IMR-90 (cell line): ENCODE measurements at regions of chr12 and their contacts with region 1.

Region 1: GRCh38 chr12:67747869-67748742 is 99.6 kb downstream of the DYRK2 start:
- DNase-seq: peak; percentile 72
- ATAC-seq: peak; percentile 86
- H3K4me3 ChIP-seq: no peak overlapping the region
- H3K27ac ChIP-seq: 0 out of 2 replicates have a peak overlapping the region, but pooled peaks have one; percentile 1
- H3K4me1 ChIP-seq: peaks cover 9% of the 10 kb centered on the region
- H3K27me3 ChIP-seq: no peaks in the 10 kb centered on the region
- CTCF ChIP-seq: no peak
- POLR2A ChIP-seq: no peak
- RAD21 ChIP-seq: no peak

Region 2: GRCh38 chr12:67517181-67517887 is 230.8 kb before region 1 on chr12:
- CTCF ChIA-PET with region 1: no interaction called
- POLR2A ChIA-PET with region 1: no interaction called
- dilution Hi-C with region 1: no loop called
- in situ Hi-C with region 1: no loop called
- intact Hi-C with region 1: no loop called
- DNase-seq: no peak
- ATAC-seq: no peak
- H3K4me3 ChIP-seq: no peak overlapping the region
- H3K27ac ChIP-seq: no peak overlapping the region
- H3K4me1 ChIP-seq: no peaks in the 10 kb centered on the region
- H3K27me3 ChIP-seq: peaks cover 12% of the 10 kb centered on the region
- CTCF ChIP-seq: no peak
- POLR2A ChIP-seq: no peak
- RAD21 ChIP-seq: no peak

Region 3: DNA sequence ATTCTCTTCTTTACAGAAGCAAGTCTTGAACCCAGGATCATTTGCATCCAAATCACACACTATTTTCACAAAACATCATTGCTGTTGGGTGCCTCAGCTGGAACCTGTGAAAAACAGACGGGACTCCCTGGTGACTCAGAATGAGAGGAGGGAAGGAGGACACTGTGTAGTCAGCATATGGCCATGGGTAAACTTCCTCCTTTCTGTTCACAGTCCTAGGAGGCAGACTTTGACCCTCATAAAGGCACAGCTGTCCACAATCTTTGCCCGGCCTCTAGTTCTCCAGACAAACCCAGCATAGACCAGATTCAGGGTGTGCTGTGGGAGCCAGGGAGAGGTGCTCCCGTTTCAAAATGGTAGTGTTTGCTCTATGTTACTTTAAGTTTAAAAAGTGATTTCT is 37.5 kb before region 1 on chr12:
- CTCF ChIA-PET with region 1: no interaction called
- POLR2A ChIA-PET with region 1: no interaction called
- dilution Hi-C with region 1: no loop called
- in situ Hi-C with region 1: no loop called
- intact Hi-C with region 1: loop called (anchors 5 kb)
- DNase-seq: peak; percentile 62
- ATAC-seq: peak; percentile 74
- H3K4me3 ChIP-seq: no peak overlapping the region
- H3K27ac ChIP-seq: no peak overlapping the region
- H3K4me1 ChIP-seq: peaks cover 7% of the 10 kb centered on the region
- H3K27me3 ChIP-seq: no peaks in the 10 kb centered on the region
- CTCF ChIP-seq: no peak
- POLR2A ChIP-seq: no peak
- RAD21 ChIP-seq: no peak

Region 4: GRCh38 chr12:67966560-67966959 is 218.5 kb after region 1 on chr12:
- CTCF ChIA-PET with region 1: no interaction called
- POLR2A ChIA-PET with region 1: no interaction called
- dilution Hi-C with region 1: no loop called
- in situ Hi-C with region 1: no loop called
- intact Hi-C with region 1: no loop called
- DNase-seq: no peak
- ATAC-seq: no peak
- H3K4me3 ChIP-seq: no peak overlapping the region
- H3K27ac ChIP-seq: no peak overlapping the region
- H3K4me1 ChIP-seq: no peaks in the 10 kb centered on the region
- H3K27me3 ChIP-seq: peaks cover 15% of the 10 kb centered on the region
- CTCF ChIP-seq: no peak
- POLR2A ChIP-seq: no peak
- RAD21 ChIP-seq: no peak

Region 5: DNA sequence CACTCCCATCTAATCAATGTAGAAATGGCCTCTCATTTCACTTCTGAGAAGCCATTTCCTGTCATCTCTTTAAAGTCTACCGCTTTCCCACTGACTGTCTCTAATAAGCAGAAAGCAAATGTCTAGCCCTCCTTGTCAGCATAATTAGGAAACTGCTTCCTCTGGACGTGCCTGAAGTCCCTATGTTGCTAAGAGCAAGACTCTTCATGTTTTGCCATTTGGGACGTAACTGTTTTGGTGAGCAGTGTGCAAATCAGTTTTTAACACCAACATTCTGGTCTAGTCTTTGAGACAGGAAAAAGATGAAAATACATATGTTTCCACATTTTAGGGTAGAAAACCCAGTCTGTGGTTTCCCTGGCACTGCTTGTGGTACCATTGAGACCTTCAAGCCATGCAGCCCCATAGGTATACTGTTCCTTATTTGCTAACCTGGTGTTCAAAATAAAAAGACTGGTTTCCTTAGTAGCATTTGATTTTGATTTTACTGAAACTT is 389.3 kb after region 1 on chr12:
- CTCF ChIA-PET with region 1: no interaction called
- POLR2A ChIA-PET with region 1: no interaction called
- dilution Hi-C with region 1: no loop called
- in situ Hi-C with region 1: no loop called
- intact Hi-C with region 1: no loop called
- DNase-seq: no peak
- ATAC-seq: no peak
- H3K4me3 ChIP-seq: no peak overlapping the region
- H3K27ac ChIP-seq: no peak overlapping the region
- H3K4me1 ChIP-seq: no peaks in the 10 kb centered on the region
- H3K27me3 ChIP-seq: no peaks in the 10 kb centered on the region
- CTCF ChIP-seq: no peak
- POLR2A ChIP-seq: no peak
- RAD21 ChIP-seq: no peak